IMR-90 (cell line): ENCODE measurements at regions of chr19 and their contacts with region 1.

Region 1: DNA sequence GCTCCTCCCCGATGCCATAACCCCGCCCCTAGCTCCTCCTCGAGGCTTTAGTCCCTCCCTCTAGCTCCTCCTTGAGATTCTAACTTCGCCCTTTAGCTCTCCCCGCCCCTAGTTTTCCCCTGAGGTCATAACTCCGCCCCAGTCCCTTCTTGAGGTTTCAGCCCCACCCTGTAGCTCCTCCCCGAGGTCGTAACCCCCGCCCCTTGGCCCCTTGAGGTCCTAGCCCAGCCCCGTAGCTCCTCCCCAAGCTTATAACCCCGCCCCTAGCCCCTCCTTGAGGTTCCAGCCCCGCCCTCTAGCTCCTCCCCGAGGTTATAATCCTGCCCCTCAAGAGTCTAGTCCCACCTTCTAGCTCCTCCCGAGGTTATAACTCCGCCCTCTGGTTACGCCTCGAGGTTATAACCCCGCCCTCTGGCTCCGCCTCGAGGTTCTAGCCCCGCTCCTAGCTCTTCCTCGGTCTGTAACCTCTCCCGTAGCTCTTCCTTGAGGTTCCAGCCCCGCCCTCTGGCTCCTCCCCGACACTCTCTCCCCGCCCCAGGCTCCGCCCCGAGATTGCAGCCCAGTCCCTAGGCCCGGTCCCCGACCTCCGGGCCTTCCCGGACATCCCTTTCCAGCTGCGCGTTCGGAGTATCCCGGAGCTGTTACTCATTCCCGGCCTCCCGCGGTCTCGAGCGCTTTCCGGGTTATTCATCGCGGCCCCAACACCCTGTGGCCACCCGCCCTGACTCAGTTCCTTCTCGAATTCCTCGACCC is 1.4 kb downstream of the PLAUR start:
- DNase-seq: peak; percentile 99
- ATAC-seq: peak; percentile 90
- H3K4me3 ChIP-seq: peak overlapping the region; percentile 90
- H3K27ac ChIP-seq: peak overlapping the region; percentile 84
- H3K4me1 ChIP-seq: peaks cover 8% of the 10 kb centered on the region
- H3K27me3 ChIP-seq: no peaks in the 10 kb centered on the region
- CTCF ChIP-seq: no peak
- POLR2A ChIP-seq: no peak; the same call in 1 of the 2 replicates
- RAD21 ChIP-seq: no peak

Region 2: DNA sequence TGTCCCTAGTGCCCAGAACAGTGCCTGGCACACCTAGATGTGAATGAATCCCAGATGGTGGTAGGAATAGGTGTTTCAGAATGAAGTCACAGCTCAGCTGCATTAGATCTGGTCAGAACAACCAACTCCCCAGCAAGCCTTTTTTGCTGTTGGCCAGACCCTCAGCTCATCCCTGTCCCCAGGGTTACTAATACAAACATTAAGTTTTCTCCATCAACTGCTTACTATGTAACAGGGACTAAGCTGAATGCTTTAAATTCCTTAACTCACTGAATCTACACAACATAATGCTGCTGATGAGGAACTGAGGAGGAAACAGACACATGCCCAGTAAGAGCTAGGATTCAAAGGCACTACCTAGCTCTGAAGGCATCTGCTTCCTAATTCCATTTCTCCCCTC is 67.4 kb after region 1 on chr19:
- CTCF ChIA-PET with region 1: interaction called, 3 read pairs
- POLR2A ChIA-PET with region 1: no interaction called
- dilution Hi-C with region 1: no loop called
- in situ Hi-C with region 1: no loop called
- intact Hi-C with region 1: loop called (anchors 2 kb)
- DNase-seq: peak; percentile 68
- ATAC-seq: peak; percentile 90
- H3K4me3 ChIP-seq: no peak overlapping the region
- H3K27ac ChIP-seq: peak overlapping the region; percentile 43; the same call in 1 of the 2 replicates
- H3K4me1 ChIP-seq: peaks cover 8% of the 10 kb centered on the region; the same call in 1 of the 2 replicates
- H3K27me3 ChIP-seq: no peaks in the 10 kb centered on the region
- CTCF ChIP-seq: no peak
- POLR2A ChIP-seq: no peak
- RAD21 ChIP-seq: peak; percentile 22; the same call in 1 of the 2 replicates

Region 3: GRCh38 chr19:43765109-43765876 is 96.7 kb after region 1 on chr19:
- CTCF ChIA-PET with region 1: no interaction called
- POLR2A ChIA-PET with region 1: no interaction called
- dilution Hi-C with region 1: no loop called
- in situ Hi-C with region 1: no loop called
- intact Hi-C with region 1: no loop called
- DNase-seq: peak; percentile 97
- ATAC-seq: peak; percentile 93
- H3K4me3 ChIP-seq: no peak overlapping the region
- H3K27ac ChIP-seq: peak overlapping the region; percentile 63
- H3K4me1 ChIP-seq: peaks cover 14% of the 10 kb centered on the region
- H3K27me3 ChIP-seq: no peaks in the 10 kb centered on the region
- CTCF ChIP-seq: no peak
- POLR2A ChIP-seq: no peak
- RAD21 ChIP-seq: peak; percentile 28; the same call in 1 of the 2 replicates

Region 4: DNA sequence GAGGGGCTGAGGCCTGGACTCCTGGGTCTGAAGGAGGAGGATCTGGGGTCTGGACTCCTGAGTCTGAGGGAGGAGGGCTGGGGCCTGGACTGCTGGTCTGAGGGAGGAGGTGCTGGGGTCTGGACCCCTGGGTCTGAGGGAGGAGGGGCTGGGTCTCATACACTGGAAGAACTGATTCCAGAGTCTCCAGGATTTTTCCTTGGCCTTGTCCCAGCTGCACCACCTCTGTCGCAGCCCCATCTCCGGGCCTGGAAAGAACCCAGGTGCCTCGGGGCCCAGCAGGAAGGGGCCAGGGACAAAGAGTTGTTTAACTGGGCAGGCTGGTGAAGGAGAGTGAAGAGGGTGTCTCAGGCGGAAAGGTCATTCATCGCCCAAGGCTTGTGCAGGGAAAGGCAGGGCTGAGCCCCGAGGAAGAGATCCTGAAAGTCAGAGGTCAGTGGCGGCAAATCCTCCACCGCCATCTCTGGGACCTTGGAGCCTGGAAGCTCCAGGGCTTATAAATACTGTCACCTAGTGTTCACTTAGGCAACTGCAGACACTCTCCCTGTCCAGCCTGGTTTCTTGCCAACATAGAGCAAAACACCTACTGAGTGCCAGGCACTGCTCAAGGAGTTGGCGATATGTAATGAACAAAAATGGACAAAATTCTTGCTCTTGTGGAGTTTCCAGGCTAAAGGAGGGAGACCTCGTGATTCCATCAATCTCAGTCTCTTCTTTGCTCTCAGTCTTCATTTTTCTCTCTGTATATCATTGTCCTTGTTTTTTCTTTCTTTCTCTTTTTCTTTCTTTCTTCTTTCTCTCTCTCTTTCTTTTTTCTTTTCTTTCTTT is 116.6 kb after region 1 on chr19:
- CTCF ChIA-PET with region 1: no interaction called
- POLR2A ChIA-PET with region 1: no interaction called
- dilution Hi-C with region 1: no loop called
- in situ Hi-C with region 1: no loop called
- intact Hi-C with region 1: loop called (anchors 1 kb)
- DNase-seq: peak; percentile 67
- ATAC-seq: peak; percentile 84
- H3K4me3 ChIP-seq: no peak overlapping the region
- H3K27ac ChIP-seq: peak overlapping the region; percentile 5
- H3K4me1 ChIP-seq: peaks cover 12% of the 10 kb centered on the region
- H3K27me3 ChIP-seq: no peaks in the 10 kb centered on the region
- CTCF ChIP-seq: peak; percentile 99
- POLR2A ChIP-seq: peak; percentile 51; the same call in 1 of the 2 replicates
- RAD21 ChIP-seq: peak; percentile 100

Region 5: GRCh38 chr19:44190020-44190419 is 521.4 kb after region 1 on chr19:
- CTCF ChIA-PET with region 1: no interaction called
- POLR2A ChIA-PET with region 1: no interaction called
- dilution Hi-C with region 1: no loop called
- in situ Hi-C with region 1: no loop called
- intact Hi-C with region 1: no loop called
- DNase-seq: no peak
- ATAC-seq: no peak
- H3K4me3 ChIP-seq: no peak overlapping the region
- H3K27ac ChIP-seq: no peak overlapping the region
- H3K4me1 ChIP-seq: no peaks in the 10 kb centered on the region
- H3K27me3 ChIP-seq: no peaks in the 10 kb centered on the region
- CTCF ChIP-seq: no peak
- POLR2A ChIP-seq: no peak
- RAD21 ChIP-seq: no peak